PC-9 (cell line): ENCODE measurements at regions of chrX and their contacts with region 1.

Region 1: DNA sequence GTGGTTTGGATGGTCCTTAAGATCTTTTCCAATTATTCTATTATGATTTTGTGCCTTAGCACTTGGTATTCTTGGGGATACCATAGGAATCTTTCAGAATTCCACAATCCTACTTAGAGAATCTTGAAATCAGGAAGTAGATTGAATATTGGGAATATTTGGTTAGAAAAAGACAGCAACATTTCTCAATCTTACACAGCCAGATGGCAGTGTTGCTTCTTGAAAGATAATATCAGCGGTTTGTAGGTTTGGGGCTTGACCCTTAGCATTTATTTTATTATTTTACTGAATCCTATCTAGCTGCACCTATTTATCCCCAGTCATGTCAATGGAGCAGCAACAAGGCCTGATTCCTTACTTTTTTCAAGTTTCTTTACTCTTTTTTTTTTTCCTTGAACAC is 28.6 kb downstream of the MAGEB1 start:
- DNase-seq: peak in 1 of 2 experiments; percentile 13
- H3K4me3 ChIP-seq: no peak overlapping the region
- H3K27ac ChIP-seq: no peak overlapping the region
- H3K4me1 ChIP-seq: no peaks in the 10 kb centered on the region
- H3K27me3 ChIP-seq: no peaks in the 10 kb centered on the region
- CTCF ChIP-seq: peak; percentile 65

Region 2: DNA sequence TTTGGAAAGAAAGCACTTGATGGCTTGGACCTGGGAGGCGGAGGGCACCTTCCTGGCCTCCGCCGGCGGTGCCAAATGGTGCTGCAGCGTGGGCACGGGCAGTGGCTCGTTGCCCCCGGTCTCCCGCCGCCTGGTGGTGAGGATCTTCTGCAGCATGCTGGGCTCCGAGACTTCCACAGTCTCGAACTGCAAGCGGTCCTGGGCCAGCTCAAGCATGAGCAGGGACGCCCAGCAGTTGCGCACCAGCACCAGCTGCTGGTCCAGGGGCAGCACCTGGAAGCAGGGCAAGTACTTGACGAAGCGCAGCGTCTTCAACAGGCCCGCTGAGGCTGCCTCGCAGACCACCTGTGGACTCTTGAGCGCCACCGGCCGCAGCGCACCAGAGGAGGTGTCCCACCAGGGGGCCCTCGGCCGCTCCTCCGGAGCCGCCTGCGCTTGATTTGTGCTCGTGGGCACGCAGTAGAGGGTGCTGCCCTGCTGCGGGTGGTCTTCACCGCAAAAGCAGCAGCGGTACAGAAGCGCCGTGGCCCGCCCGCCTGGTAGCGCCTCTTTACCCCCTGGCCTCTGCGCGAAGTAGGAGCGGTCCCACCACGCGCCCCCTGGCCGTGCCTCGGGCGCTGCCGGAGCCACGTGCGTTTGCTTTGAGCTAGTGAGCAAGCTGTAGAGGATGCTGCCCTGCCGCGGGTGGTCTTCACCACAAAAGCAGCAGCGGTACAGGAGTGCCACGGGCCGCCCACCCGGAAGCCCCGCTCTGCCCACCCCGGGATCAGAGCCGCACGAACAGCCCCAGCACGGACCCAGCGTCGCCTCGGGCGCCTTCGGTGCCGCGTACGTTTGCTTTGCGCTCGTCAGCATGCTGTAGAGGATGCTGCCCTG is 33.0 kb after region 1 on chrX:
- CTCF ChIA-PET with region 1: interaction called, 4 read pairs
- POLR2A ChIA-PET with region 1: interaction called, 5 read pairs
- intact Hi-C with region 1: loop called (anchors 1 kb)
- DNase-seq: peak in 1 of 2 experiments; percentile 66
- H3K4me3 ChIP-seq: no peak overlapping the region
- H3K27ac ChIP-seq: no peak overlapping the region
- H3K4me1 ChIP-seq: no peaks in the 10 kb centered on the region
- H3K27me3 ChIP-seq: no peaks in the 10 kb centered on the region
- CTCF ChIP-seq: no peak

Region 3: DNA sequence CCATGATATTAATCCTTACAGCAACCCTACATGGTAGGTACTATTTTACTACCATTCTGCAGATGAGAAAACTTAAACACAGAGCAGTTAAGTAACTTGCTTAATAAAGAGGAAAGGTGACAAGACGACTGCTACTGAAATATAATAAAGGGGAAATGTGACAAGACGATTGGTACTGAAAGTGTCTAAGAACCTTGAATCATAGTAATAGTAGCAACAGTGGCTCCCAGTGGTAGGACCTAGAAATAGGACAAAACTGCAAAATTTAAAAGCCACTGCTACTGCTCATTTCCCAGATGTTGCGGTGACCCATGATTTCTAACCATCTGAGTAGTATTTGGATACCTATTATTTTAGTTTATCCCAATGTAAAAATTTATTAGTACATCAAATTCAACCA is 212.6 kb after region 1 on chrX:
- CTCF ChIA-PET with region 1: no interaction called
- POLR2A ChIA-PET with region 1: no interaction called
- intact Hi-C with region 1: loop called (anchors 5 kb)
- DNase-seq: no peak
- H3K4me3 ChIP-seq: no peak overlapping the region
- H3K27ac ChIP-seq: no peak overlapping the region
- H3K4me1 ChIP-seq: no peaks in the 10 kb centered on the region
- H3K27me3 ChIP-seq: no peaks in the 10 kb centered on the region
- CTCF ChIP-seq: no peak

Region 4: GRCh38 chrX:30504309-30504708 is 228.8 kb after region 1 on chrX:
- CTCF ChIA-PET with region 1: no interaction called
- POLR2A ChIA-PET with region 1: no interaction called
- intact Hi-C with region 1: loop called (anchors 1 kb)
- DNase-seq: peak in 1 of 2 experiments; percentile 37
- H3K4me3 ChIP-seq: no peak overlapping the region
- H3K27ac ChIP-seq: no peak overlapping the region
- H3K4me1 ChIP-seq: no peaks in the 10 kb centered on the region
- H3K27me3 ChIP-seq: no peaks in the 10 kb centered on the region
- CTCF ChIP-seq: peak; percentile 70